Esophagus muscularis mucosa (tissue), 4 donors: ENCODE measurements at regions of chr1 and their contacts with region 1.

Region 1: GRCh38 chr1:226062558-226063223 is at the start of gene H3-3A:
- DNase-seq: peak; percentile 100
- H3K4me3 ChIP-seq: peak within 1 kb of the TSS; percentile 84 to 91 (median 88)
- H3K27ac ChIP-seq: peak within 1 kb of the TSS; percentile 98 to 100 (median 99)
- H3K4me1 ChIP-seq: peaks cover 32 to 54% (median 49%) of the 10 kb centered on the region in 4 donors
- H3K27me3 ChIP-seq: no peaks in the 10 kb centered on the region
- CTCF ChIP-seq: peak in 2 of 3 experiments; percentile 13 to 17
- EP300 ChIP-seq: no peak
- POLR2A ChIP-seq: peak; percentile 88
- total RNA-seq, gene H3-3A: 319 to 384 (median 350) TPM

Region 2: GRCh38 chr1:225999227-225999911 is 63.3 kb before region 1 on chr1 and contains the start of gene SDE2:
- intact Hi-C with region 1: loop called (anchors 5 kb)
- DNase-seq: peak; percentile 100
- H3K4me3 ChIP-seq: peak within 1 kb of the TSS; percentile 69 to 82 (median 74)
- H3K27ac ChIP-seq: peak within 1 kb of the TSS; percentile 92 to 97 (median 95)
- H3K4me1 ChIP-seq: peaks cover 37 to 48% (median 46%) of the 10 kb centered on the region in 4 donors
- H3K27me3 ChIP-seq: no peaks in the 10 kb centered on the region
- CTCF ChIP-seq: peak in 1 of 3 experiments; percentile 17
- EP300 ChIP-seq: no peak
- POLR2A ChIP-seq: peak; percentile 73
- total RNA-seq, gene SDE2: 15.0 to 22.5 (median 19.1) TPM

Region 3: GRCh38 chr1:226186124-226187018 is 123.7 kb after region 1 on chr1 and contains the start of gene ACBD3:
- intact Hi-C with region 1: loop called (anchors 5 kb)
- DNase-seq: peak; percentile 95
- H3K4me3 ChIP-seq: peak within 1 kb of the TSS; percentile 82 to 96 (median 90)
- H3K27ac ChIP-seq: peak within 1 kb of the TSS; percentile 88 to 96 (median 94)
- H3K4me1 ChIP-seq: peaks cover 42 to 53% (median 47%) of the 10 kb centered on the region in 4 donors
- H3K27me3 ChIP-seq: no peaks in the 10 kb centered on the region
- CTCF ChIP-seq: peak in 1 of 3 experiments; percentile 33
- EP300 ChIP-seq: no peak
- POLR2A ChIP-seq: peak; percentile 79
- total RNA-seq, gene ACBD3: 28.1 to 53.6 (median 32.6) TPM